Activated CD4-positive, alpha-beta memory T cell treated with anti-CD3 and anti-CD28 coated beads for 36 hours (primary cell): ENCODE measurements at regions of chr21 and their contacts with region 1.

Region 1: DNA sequence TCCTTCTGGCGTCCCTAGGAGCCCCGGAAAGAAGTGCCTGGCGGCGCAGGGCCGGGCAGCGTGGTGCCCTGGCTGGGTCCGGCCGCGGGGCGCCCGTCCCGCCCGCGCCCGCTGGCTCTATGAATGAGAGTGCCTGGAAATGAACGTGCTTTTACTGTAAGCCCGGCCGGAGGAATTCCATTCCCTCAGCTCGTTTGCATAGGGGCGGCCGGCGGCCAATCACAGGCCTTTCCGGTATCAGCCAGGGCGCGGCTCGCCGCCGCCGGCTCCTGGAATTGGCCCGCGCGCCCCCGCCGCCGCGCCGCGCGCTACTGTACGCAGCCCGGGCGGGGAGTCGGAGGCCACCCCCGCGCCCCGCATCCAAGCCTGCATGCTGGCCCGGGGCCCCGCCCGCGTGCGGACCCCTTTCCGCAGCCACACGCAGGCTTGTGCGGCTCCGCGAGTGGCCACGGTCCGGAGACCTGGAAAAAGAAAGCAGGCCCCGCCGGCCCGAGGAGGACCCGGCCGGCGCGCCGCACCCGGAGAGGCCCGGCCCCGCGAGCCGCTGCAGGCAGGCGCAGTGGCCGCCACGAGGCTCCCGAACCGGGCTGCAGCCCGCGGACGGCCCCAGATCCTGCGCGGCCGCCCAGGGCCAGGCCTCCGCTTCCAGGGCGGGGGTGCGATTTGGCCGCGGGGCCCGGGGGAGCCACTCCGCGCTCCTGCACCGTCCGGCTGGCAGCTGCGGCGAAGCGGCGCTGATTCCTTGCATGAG is 160.4 kb downstream of the RUNX1 start:
- DNase-seq: peak; percentile 92
- H3K4me3 Mint-ChIP-seq: peak overlapping the region; percentile 89
- H3K27ac Mint-ChIP-seq: peak overlapping the region; percentile 100
- H3K4me1 Mint-ChIP-seq: peaks cover 44% of the 10 kb centered on the region
- H3K27me3 Mint-ChIP-seq: peaks cover 5% of the 10 kb centered on the region

Region 2: DNA sequence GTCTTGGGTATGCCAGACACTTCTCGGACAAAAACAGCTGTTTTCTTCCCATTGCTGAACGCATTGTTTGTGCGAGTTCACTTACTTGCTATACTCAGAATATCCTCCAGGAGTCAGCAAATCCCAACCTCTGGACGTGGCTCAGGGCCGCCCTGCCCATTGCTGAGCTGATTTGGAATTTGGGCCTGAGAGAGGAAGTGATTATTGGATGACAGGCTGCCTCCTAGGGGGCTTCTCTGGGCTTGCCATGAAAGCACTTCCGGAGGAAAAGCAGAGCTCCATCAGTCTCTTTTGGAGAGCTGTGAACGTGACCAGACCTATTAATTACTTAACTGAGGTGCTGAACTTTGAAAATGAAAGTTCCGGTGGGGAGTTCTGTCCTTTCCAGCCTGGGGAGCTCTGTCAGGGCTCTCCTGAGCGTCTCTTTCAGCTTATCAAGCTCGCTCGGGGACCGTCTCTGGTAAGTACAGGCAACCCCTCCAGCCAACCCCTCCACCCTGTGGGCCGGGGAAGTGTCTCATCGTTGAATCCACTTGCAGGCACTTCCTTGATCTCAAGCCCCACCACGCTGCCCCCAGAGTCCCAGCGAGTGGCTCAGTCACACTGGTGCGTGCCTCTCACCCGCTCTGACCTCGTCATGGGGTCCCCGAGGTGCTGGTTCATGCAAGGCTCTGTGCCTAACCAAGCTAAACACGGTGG is 143.0 kb before region 1 on chr21:
- CTCF ChIA-PET with region 1: interaction called, 34 read pairs
- POLR2A ChIA-PET with region 1: no interaction called
- intact Hi-C with region 1: loop called (anchors 1 kb)
- DNase-seq: peak; percentile 72
- H3K4me3 Mint-ChIP-seq: peak overlapping the region; percentile 43
- H3K27ac Mint-ChIP-seq: no peak overlapping the region
- H3K4me1 Mint-ChIP-seq: peaks cover 5% of the 10 kb centered on the region
- H3K27me3 Mint-ChIP-seq: peaks cover 14% of the 10 kb centered on the region

Region 3: DNA sequence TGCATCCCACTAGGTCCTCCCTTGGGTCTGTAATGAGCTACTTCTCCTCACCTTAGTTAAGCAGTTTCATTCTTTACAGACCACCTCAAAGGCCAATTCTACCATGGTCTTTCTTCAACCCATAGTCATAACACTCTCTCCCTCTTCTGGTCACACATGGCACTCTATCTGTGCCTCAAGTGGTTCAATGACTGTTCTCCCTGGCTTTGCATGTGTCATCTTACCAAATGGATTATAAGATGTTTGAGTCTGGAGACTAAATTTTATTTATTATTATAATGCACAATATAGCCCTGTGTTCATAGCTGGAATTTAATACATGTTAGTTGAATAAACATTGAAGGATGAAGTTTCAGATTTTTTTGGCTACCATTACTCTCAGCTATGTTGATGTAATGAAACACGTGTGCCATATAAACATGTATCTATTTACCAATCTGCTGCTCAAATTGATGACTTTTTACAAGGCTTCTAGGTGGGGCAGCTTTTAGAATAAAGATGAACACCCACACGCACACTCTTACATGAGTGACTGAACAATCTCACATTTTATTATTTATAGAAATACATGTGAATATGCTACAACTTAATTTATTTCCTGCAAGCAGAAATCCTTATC is 58.3 kb after region 1 on chr21:
- CTCF ChIA-PET with region 1: interaction called, 14 read pairs
- POLR2A ChIA-PET with region 1: interaction called, 15 read pairs
- intact Hi-C with region 1: loop called (anchors 2 kb)
- DNase-seq: no peak
- H3K4me3 Mint-ChIP-seq: no peak overlapping the region
- H3K27ac Mint-ChIP-seq: peak overlapping the region; percentile 88
- H3K4me1 Mint-ChIP-seq: peaks cover 90% of the 10 kb centered on the region
- H3K27me3 Mint-ChIP-seq: no peaks in the 10 kb centered on the region

Region 4: DNA sequence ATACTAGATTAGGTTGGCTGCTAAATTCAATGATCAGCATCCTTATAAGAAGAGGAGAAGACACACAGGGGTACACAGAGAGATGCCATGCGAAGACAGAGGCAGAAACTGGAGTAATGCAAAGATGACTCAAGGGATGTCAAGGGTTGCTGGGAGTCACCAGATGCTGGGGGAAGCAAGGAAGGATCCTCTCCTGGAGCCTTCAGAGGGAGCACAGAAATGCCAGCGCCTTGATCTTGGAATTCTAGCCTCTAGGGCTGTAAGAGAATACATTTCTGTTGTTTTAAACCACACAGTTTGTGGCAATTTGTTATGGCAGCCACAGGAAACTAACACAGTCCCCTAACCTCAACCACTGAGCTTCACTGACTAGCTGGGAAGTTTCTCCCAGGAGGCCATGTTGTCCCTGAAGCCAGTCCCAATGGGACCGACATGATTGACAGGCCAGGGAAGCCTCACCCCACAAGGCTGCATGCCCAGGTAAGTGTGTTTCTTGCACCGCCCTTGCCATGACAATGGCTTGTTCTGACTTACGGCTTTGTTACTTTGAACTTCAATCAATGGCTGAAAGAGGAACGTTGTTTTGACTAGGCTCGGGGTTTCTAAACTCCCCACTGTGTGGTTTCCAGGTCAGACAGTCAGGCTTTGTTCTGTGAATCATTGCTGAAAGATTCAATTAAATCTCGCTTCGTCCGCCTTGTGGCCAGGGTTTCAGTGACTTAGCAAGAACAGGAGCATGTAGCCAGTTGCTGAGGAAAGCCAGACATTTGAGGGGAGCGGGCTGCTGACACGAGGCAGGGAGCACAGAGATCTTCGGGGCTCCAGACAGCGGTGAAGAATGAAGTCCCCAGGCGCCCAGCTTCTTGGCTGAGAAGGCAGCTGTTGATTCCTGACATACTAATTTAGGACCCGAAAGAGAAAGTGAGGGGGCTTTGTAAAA is 98.1 kb after region 1 on chr21:
- CTCF ChIA-PET with region 1: interaction called, 29 read pairs
- POLR2A ChIA-PET with region 1: interaction called, 74 read pairs
- intact Hi-C with region 1: loop called (anchors 1 kb)
- DNase-seq: peak; percentile 92
- H3K4me3 Mint-ChIP-seq: peak overlapping the region; percentile 67
- H3K27ac Mint-ChIP-seq: peak overlapping the region; percentile 90
- H3K4me1 Mint-ChIP-seq: peaks cover 95% of the 10 kb centered on the region
- H3K27me3 Mint-ChIP-seq: no peaks in the 10 kb centered on the region

Region 5: DNA sequence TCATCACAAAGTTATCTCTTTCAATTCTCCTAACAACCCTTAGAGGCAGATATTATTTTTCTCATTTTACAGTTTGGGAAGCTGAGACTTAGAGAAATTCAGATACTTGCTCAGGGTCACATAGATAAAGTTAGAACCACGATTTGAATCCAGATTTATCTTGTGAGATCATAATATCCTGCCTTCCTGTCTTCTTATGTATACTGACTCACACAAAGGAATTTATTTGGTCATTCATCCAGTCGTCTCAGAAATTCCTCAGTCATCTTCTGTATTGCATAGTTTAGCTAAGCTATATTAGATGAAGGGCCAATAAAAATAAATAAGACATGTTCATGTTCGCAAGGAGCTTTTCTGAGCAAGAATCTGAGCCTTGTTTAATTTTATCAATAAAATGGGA is 196.1 kb after region 1 on chr21:
- CTCF ChIA-PET with region 1: interaction called, 9 read pairs
- POLR2A ChIA-PET with region 1: interaction called, 11 read pairs
- intact Hi-C with region 1: loop called (anchors 2 kb)
- DNase-seq: no peak
- H3K4me3 Mint-ChIP-seq: no peak overlapping the region
- H3K27ac Mint-ChIP-seq: no peak overlapping the region
- H3K4me1 Mint-ChIP-seq: peaks cover 39% of the 10 kb centered on the region
- H3K27me3 Mint-ChIP-seq: no peaks in the 10 kb centered on the region

Region 6: DNA sequence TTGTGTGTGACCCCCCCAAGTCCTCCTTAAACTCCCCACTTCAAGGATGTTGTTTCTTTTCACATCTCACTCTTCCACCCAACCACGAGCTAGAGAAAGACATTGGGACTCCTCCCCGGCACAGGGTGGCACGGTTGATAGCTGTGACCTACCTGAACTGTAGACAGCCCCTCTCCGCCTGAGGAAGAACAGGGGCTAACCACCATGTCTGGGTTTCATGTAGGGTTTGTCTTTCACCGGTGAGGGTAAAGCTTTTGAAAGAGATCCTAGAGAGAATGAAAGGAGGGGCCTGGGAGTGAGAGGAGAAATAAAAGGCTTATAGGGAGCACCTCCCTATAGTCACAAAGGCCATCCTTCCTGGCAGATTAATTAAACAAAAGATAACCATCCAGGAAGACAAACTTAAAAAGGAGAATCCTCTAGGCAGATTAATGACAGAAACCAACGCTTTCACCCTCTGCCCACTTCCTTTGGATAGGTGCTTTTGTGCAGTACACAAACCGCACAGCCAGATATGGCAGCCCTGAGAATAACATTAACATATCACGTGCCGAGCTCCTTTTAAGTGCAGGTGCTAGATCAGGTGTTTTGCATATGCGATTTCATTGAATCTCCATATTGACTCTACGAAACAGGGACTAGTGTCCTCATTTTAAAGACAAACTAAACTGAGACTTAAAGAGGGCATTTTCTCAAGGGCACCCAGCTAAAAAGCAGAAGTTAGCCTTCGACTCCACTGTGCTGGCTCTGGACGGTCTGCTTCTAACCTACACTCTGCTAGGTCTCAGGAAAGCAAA is 338.4 kb after region 1 on chr21:
- CTCF ChIA-PET with region 1: no interaction called
- POLR2A ChIA-PET with region 1: no interaction called
- intact Hi-C with region 1: loop called (anchors 5 kb)
- DNase-seq: peak; percentile 76
- H3K4me3 Mint-ChIP-seq: peak overlapping the region; percentile 49
- H3K27ac Mint-ChIP-seq: peak overlapping the region; percentile 62
- H3K4me1 Mint-ChIP-seq: peaks cover 38% of the 10 kb centered on the region
- H3K27me3 Mint-ChIP-seq: no peaks in the 10 kb centered on the region

Region 7: DNA sequence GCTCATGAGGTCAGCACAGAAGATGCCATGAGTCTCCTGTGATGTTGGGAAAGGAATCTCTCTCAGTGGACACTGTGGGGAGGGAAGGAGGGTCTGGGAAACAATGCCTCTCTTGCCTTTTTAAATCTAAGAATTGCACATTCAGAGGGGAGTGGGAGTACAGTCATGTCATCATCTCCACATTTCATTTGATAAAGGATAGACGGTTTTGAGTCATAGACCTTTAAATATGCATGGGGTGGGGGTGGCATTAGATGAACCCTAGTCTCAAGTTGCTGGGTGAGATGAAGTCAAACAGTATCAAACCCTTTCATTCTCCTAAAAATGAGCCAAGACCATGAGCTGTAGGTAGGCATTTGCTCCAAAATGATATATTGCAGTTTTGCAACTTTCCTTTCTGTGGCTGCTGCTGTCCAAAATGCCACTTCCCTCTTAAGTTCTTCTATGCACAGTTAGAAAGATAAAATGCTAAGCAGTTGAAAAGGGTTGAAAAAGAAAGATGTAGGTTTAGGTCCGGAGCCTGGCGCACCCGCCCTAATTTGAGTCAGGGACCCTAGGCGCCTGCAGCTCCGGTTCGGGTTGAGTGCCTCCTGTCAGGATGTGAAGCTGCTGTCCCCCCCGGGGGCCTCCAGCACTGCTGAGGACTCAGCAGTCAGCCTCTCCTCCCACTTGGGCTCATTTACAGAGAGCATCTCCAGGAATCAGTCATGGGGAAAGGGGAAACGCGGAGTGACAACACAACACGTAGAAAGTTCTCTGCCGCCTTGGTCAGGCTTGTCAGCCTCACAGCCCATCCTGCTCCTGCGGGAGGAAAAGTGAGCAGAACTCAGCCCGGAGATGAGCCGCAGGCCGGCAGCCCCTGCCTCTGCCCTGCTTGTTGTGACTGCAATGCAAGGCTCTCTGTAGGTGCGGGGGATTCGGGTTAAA is 639.6 kb after region 1 on chr21:
- CTCF ChIA-PET with region 1: no interaction called
- POLR2A ChIA-PET with region 1: interaction called, 3 read pairs
- intact Hi-C with region 1: loop called (anchors 10 kb)
- DNase-seq: peak; percentile 78
- H3K4me3 Mint-ChIP-seq: peak overlapping the region; percentile 80
- H3K27ac Mint-ChIP-seq: peak overlapping the region; percentile 84
- H3K4me1 Mint-ChIP-seq: peaks cover 48% of the 10 kb centered on the region
- H3K27me3 Mint-ChIP-seq: no peaks in the 10 kb centered on the region